A673 (cell line): ENCODE measurements at regions of chr19 and their contacts with region 1.

Region 1: GRCh38 chr19:7970716-7971448 is 27.4 kb upstream of the TIMM44 start:
- DNase-seq: peak; percentile 67
- H3K4me3 ChIP-seq: no peak overlapping the region
- H3K27ac ChIP-seq: no peak overlapping the region
- H3K4me1 ChIP-seq: no peaks in the 10 kb centered on the region
- H3K27me3 ChIP-seq: no peaks in the 10 kb centered on the region
- CTCF ChIP-seq: peak; percentile 85

Region 2: GRCh38 chr19:7705387-7706187 is 265.3 kb before region 1 on chr19:
- CTCF ChIA-PET with region 1: interaction called, 10 read pairs
- POLR2A ChIA-PET with region 1: no interaction called
- intact Hi-C with region 1: no loop called
- DNase-seq: no peak
- H3K4me3 ChIP-seq: no peak overlapping the region
- H3K27ac ChIP-seq: no peak overlapping the region
- H3K4me1 ChIP-seq: no peaks in the 10 kb centered on the region
- H3K27me3 ChIP-seq: peaks cover 3% of the 10 kb centered on the region
- CTCF ChIP-seq: no peak

Region 3: GRCh38 chr19:7806234-7806633 is 164.6 kb before region 1 on chr19:
- CTCF ChIA-PET with region 1: no interaction called
- POLR2A ChIA-PET with region 1: no interaction called
- intact Hi-C with region 1: no loop called
- DNase-seq: no peak
- H3K4me3 ChIP-seq: no peak overlapping the region
- H3K27ac ChIP-seq: no peak overlapping the region
- H3K4me1 ChIP-seq: no peaks in the 10 kb centered on the region
- H3K27me3 ChIP-seq: peaks cover 15% of the 10 kb centered on the region
- CTCF ChIP-seq: no peak